BJ (cell line): ENCODE measurements at regions of chr15 and their contacts with region 1.

Region 1: DNA sequence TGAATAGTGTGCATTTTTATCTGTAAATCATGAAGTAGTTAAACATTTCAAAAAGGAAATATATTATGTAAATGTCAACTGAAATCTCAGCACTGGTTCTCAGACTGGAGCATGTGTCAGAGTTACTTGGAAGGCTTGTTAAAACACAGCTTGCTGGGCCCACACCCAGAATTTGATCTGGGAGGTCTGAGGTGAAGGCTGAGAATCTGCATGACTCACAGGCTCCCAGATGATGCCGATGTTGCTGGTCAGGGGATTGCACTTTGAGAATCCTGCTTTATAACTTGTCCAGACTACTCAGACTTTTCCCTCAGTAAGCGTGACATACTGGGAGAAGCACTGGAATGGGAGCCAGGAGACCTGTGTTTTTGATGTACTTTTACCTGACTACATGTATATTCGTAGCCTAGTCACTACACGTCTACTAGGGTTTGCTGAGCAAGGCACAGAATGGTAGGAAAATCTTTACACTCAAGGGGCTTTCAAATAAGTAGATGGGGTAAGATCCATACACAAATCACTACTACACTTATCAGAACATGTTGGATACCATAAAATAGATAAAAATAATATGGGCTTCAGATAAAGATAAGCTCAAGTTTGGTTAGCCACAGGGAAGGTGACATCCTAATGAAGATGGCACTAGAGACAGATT is 77.1 kb upstream of the MEX3B start:
- DNase-seq: peak; percentile 95
- H3K4me3 ChIP-seq: no peak overlapping the region
- H3K27me3 ChIP-seq: no peaks in the 10 kb centered on the region
- CTCF ChIP-seq: no peak

Region 2: GRCh38 chr15:82139823-82140268 is 17.0 kb after region 1 on chr15:
- CTCF ChIA-PET with region 1: interaction called, 11 read pairs
- POLR2A ChIA-PET with region 1: no interaction called
- DNase-seq: no peak
- H3K4me3 ChIP-seq: no peak overlapping the region
- H3K27me3 ChIP-seq: no peaks in the 10 kb centered on the region
- CTCF ChIP-seq: peak; percentile 75